Posterior cingulate gyrus (tissue), 11 donors: ENCODE measurements at regions of chr1 and their contacts with region 1.

Region 1: GRCh38 chr1:26233903-26234643 is at the start of gene CEP85:
- DNase-seq: peak; percentile 96 to 100 (median 99)

Region 2: GRCh38 chr1:26111530-26112406 is 122.3 kb before region 1 on chr1 and contains the start of gene PDIK1L:
- intact Hi-C with region 1: loop called (anchors 5 kb)
- DNase-seq: peak; percentile 86 to 98 (median 89)

Region 3: GRCh38 chr1:26169669-26170471 is 64.2 kb before region 1 on chr1 and contains the start of gene ZNF593:
- intact Hi-C with region 1: loop called (anchors 5 kb)
- DNase-seq: peak; percentile 85 to 99 (median 92)

Region 4: GRCh38 chr1:26254404-26254803 is 20.3 kb after region 1 on chr1:
- intact Hi-C with region 1: no loop called
- DNase-seq: no peak

Region 5: GRCh38 chr1:26279456-26280332 is 45.6 kb after region 1 on chr1 and contains the start of gene SH3BGRL3:
- intact Hi-C with region 1: loop called (anchors 5 kb)
- DNase-seq: peak; percentile 76 to 97 (median 88)